Breast epithelium (tissue), 4 donors: ENCODE measurements at regions of chr18 and their contacts with region 1.

Region 1: GRCh38 chr18:74353169-74353775 is 37.6 kb downstream of the C18orf63 start:
- DNase-seq: peak in 1 of 2 donors; percentile 43
- H3K4me3 ChIP-seq: no peak overlapping the region
- H3K27ac ChIP-seq: no peak overlapping the region
- H3K4me1 ChIP-seq: no peaks in the 10 kb centered on the region
- H3K27me3 ChIP-seq: no peaks in the 10 kb centered on the region
- CTCF ChIP-seq: peak in 2 of 3 donors; percentile 65 to 71
- POLR2A ChIP-seq: no peak

Region 2: GRCh38 chr18:74551936-74552555 is 198.8 kb after region 1 on chr18:
- intact Hi-C with region 1: loop called (anchors 10 kb)
- DNase-seq: peak; percentile 67 to 72
- H3K4me3 ChIP-seq: no peak overlapping the region
- H3K27ac ChIP-seq: no peak overlapping the region
- H3K4me1 ChIP-seq: no peaks in the 10 kb centered on the region
- H3K27me3 ChIP-seq: no peaks in the 10 kb centered on the region
- CTCF ChIP-seq: peak; percentile 57 to 76 (median 68)
- POLR2A ChIP-seq: no peak